ENCODE measurements at regions of chr11 and their contacts with region 1.

Region 1: DNA sequence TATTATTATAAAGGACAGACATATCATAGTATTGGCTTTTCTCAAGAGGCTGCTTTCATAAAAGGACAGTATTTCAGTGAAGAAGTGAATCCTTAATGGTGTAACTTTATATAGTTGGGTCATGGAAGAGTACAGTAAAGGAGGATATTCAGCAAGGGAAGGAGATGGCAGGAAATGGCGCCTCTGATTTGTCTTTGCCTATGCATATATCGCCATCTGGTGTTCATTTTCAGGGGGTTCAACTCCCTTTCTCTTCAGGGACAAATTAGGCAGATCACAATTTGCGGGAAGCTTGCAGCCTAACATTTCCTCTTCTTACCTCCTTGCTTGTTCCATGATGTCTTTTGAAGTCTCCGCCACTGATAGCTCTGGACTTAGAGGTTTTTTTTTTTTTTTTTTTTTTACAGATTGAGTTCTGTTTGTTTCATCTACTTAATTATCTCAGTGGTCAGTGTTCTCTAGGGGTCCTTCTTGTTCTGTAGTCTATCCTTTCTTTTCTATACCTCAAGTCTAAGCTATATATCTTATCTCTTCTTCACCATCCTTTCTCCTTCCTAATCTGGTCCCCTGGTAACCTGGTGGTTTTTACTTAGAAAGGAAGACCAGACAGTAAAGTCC is 21.8 kb upstream of the RRM1 start:
- DNase-seq: peak; percentile 49
- ATAC-seq: peak; percentile 72
- H3K4me3 Mint-ChIP-seq: no peak overlapping the region
- H3K27ac Mint-ChIP-seq: peak overlapping the region; percentile 74
- H3K4me1 Mint-ChIP-seq: peaks cover 35% of the 10 kb centered on the region
- H3K27me3 Mint-ChIP-seq: no peaks in the 10 kb centered on the region
- CTCF ChIP-seq: peak; percentile 78

Region 2: GRCh38 chr11:3807909-3808860 is 264.6 kb before region 1 on chr11 and contains the start of gene PGAP2:
- CTCF ChIA-PET with region 1: interaction called, 36 read pairs
- POLR2A ChIA-PET with region 1: no interaction called
- intact Hi-C with region 1: no loop called
- DNase-seq: peak; percentile 70
- ATAC-seq: peak; percentile 80
- H3K4me3 Mint-ChIP-seq: peak within 1 kb of the TSS; percentile 95
- H3K27ac Mint-ChIP-seq: peak within 1 kb of the TSS; percentile 91
- H3K4me1 Mint-ChIP-seq: peaks cover 22% of the 10 kb centered on the region
- H3K27me3 Mint-ChIP-seq: no peaks in the 10 kb centered on the region
- CTCF ChIP-seq: peak; percentile 58
- total RNA-seq, gene PGAP2: 33.1 to 36.7 TPM

Region 3: GRCh38 chr11:3854977-3855807 is 217.6 kb before region 1 on chr11 and contains the start of gene STIM1:
- CTCF ChIA-PET with region 1: interaction called, 775 read pairs
- POLR2A ChIA-PET with region 1: interaction called, 26 read pairs
- intact Hi-C with region 1: no loop called
- DNase-seq: peak; percentile 98
- ATAC-seq: peak; percentile 79
- H3K4me3 Mint-ChIP-seq: peak within 1 kb of the TSS; percentile 87
- H3K27ac Mint-ChIP-seq: peak within 1 kb of the TSS; percentile 98
- H3K4me1 Mint-ChIP-seq: peaks cover 60% of the 10 kb centered on the region
- H3K27me3 Mint-ChIP-seq: no peaks in the 10 kb centered on the region
- CTCF ChIP-seq: peak; percentile 89
- total RNA-seq, gene STIM1: 60.8 to 61.4 TPM

Region 4: GRCh38 chr11:3927133-3927796 is 145.5 kb before region 1 on chr11:
- CTCF ChIA-PET with region 1: interaction called, 13 read pairs
- POLR2A ChIA-PET with region 1: no interaction called
- intact Hi-C with region 1: no loop called
- DNase-seq: no peak
- ATAC-seq: no peak
- H3K4me3 Mint-ChIP-seq: no peak overlapping the region
- H3K27ac Mint-ChIP-seq: no peak overlapping the region
- H3K4me1 Mint-ChIP-seq: peaks cover 36% of the 10 kb centered on the region
- H3K27me3 Mint-ChIP-seq: no peaks in the 10 kb centered on the region
- CTCF ChIP-seq: no peak

Region 5: DNA sequence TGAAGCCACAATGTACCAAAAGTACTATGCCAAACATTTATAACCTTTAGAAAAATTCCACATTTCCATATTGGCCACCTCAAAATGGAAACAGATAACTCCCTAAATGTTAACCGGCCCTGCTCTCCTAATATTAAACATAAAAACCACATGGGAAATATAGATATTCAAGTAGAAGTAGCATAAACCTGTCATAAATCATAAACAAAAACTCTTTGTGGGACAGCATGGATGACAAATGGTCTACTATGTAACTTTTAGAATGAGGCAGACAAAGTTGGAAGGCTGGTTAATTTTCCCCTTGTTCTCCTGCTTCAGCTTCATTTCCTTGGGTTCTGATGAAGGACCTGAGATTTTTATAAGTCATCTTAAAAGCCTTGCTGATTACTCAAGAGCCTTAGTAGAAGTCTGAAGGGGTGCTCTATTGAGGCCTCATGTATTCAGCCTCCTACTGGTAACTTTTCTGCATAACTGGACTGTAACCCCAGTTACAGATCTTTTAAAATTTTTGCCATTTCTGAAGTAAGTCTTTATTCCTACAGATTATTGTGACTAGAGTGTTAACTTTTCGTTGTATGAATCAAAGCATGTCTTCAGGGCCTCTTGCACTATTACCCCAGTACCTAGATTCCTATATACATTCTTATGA is 100.9 kb before region 1 on chr11:
- CTCF ChIA-PET with region 1: interaction called, 12 read pairs
- POLR2A ChIA-PET with region 1: no interaction called
- intact Hi-C with region 1: no loop called
- DNase-seq: no peak
- ATAC-seq: no peak
- H3K4me3 Mint-ChIP-seq: no peak overlapping the region
- H3K27ac Mint-ChIP-seq: peak overlapping the region; percentile 25
- H3K4me1 Mint-ChIP-seq: peaks cover 61% of the 10 kb centered on the region
- H3K27me3 Mint-ChIP-seq: no peaks in the 10 kb centered on the region
- CTCF ChIP-seq: no peak

Region 6: DNA sequence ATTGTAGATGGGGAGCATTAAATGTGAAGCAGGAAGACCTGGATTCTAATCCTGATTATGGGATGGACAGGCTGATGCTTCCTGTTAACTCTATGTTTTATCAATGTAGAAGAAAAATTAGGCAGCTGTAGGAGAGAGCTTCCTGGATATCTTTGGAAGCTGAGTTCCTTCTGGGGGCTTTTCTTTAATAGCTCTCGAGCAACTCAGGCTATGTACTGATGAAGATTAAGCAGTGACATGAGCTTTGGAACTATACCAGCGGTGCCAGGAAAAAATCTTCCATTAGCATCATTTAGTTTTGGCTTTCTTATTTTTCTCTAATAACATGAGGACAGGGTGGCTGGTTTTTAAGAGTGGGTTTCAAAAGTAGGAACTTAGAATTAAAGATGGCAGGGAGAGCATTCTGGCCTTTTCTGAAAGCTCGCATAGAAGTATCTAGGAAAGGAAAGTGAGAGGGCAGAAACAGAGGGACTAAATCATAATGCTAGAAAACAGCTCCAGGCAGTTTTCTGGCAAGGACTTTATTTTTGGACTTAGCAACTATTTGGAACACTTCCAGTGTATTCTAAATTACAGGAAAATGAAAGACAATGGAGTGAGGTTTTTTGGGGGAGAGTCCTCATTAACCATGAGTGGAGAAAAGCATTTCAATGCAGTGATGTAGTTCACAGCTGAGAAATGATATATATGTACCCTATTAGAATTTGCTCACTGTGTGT is 47.4 kb before region 1 on chr11:
- CTCF ChIA-PET with region 1: interaction called, 21 read pairs
- POLR2A ChIA-PET with region 1: interaction called, 3 read pairs
- intact Hi-C with region 1: no loop called
- DNase-seq: no peak
- ATAC-seq: no peak
- H3K4me3 Mint-ChIP-seq: no peak overlapping the region
- H3K27ac Mint-ChIP-seq: peak overlapping the region; percentile 18
- H3K4me1 Mint-ChIP-seq: peaks cover 10% of the 10 kb centered on the region
- H3K27me3 Mint-ChIP-seq: no peaks in the 10 kb centered on the region
- CTCF ChIP-seq: no peak

Region 7: GRCh38 chr11:4433856-4434255 is 361.1 kb after region 1 on chr11:
- CTCF ChIA-PET with region 1: no interaction called
- POLR2A ChIA-PET with region 1: no interaction called
- intact Hi-C with region 1: no loop called
- DNase-seq: no peak
- ATAC-seq: no peak
- H3K4me3 Mint-ChIP-seq: no peak overlapping the region
- H3K27ac Mint-ChIP-seq: no peak overlapping the region
- H3K4me1 Mint-ChIP-seq: no peaks in the 10 kb centered on the region
- H3K27me3 Mint-ChIP-seq: no peaks in the 10 kb centered on the region
- CTCF ChIP-seq: no peak

Measured in activated CD8-positive, alpha-beta T cell treated with anti-CD3 and anti-CD28 coated beads for 36 hours (primary cell).